ENCODE measurements at regions of chrX and their contacts with region 1.

Region 1: DNA sequence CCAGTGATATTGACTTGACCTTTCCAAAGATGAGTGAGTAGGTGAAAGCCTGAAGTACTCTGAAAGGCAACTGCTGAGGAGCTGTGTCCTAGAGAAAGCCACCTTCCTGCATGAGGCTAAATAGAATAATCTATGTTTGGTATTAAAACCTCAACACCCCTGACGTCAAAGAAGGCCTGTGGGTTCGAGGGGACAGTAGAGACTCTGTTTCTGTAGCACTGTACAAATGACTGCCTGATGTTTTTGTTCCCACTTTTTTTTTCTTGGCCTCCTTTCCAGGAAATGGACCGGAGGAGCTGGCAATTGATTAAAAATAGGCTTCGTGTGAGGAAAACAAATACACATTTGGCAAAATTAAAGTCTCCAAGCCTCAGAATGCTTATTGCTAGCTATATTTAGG is 29.5 kb downstream of the TMEM255A start:
- DNase-seq: no peak

Region 2: GRCh38 chrX:121146059-121146628 is 864.4 kb after region 1 on chrX:
- intact Hi-C with region 1: loop called in 1 of 2 experiments (anchors 5 kb)
- DNase-seq: no peak